Psoas muscle (tissue), 8 donors: ENCODE measurements at regions of chr3 and their contacts with region 1.

Region 1: DNA sequence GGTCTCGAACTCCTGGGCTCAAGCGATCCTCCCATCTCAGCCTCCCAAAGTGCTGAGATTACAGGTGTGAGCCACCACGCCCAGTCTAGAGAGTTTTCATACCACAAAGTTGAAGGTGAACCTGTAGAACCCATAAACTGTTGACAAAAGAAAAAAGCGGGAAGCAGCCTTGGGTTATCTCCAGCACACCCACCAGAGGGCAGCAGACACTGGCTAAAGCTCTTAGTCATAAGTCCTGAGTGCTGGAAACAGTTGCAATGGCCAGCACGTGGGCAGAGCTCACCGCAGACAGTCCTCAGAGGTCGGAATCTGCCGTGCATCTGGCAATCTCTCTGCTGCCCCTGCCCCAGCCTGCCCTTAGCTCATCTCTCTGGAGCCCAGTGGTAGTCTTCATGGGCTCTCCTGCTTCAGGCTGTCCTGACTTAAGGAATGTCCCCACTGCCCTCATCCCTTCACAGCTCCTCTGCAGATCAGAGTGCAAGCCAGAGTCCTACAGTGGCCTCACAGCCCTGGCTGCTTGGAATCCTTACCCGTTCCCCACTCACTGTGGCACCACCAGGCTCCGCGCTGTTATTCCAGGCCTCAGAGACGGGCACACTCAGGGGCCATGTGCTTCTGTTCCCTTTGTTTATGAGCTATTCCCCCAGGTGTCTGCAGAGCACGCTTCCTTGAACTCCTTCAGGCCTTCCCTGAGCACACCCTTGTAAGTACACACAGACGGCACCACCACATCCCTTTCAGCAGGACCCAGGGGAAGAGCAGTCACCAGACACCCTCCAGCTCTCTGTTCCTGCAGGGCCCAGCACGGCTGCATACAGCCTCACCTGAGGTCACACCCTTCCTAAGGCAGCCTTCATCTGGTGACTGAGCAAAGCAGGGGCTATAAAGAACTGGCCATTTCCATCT is 8.8 kb upstream of the ELP6 start:
- DNase-seq: peak; percentile 72 to 89
- ATAC-seq: peak; percentile 97 to 100 (median 99)
- H3K4me3 ChIP-seq: no peak overlapping the region
- H3K27ac ChIP-seq: no peak overlapping the region
- H3K4me1 ChIP-seq: no peaks in the 10 kb centered on the region
- H3K27me3 ChIP-seq: no peaks in the 10 kb centered on the region
- CTCF ChIP-seq: peak; percentile 91

Region 2: DNA sequence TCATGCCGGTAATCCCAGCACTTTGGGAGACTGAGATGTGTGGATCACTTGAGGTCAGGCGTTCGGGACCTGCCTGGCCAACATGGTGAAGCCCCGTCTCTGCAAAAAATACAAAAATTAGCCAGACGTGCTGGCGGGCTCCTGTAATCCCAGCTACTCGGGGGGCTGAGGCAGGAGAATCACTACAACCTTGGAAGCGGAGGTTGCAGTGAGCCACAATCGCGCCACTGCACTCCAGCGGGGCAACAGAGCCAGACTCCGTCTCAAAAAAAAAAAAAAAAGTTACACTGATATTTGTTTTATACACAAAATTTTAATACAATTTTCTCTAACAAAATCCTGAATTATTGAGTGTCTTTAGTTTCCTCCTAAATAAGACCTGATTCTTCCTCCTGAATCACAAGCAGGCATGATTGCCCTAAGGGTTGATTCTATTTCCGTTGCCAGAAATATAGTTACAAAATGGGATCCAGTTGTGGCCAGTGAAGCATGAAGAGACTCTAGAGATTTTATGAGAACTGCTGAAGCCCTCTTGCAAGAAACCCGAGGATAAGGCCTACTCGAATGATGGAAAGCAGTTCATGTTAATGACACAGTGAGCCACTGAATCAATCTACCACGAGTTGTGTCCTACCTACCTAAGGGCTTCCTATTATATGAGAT is 269.0 kb after region 1 on chr3:
- intact Hi-C with region 1: loop called (anchors 1 to 2 kb)
- DNase-seq: no peak
- ATAC-seq: no peak
- H3K4me3 ChIP-seq: no peak overlapping the region
- H3K27ac ChIP-seq: no peak overlapping the region
- H3K4me1 ChIP-seq: no peaks in the 10 kb centered on the region
- H3K27me3 ChIP-seq: no peaks in the 10 kb centered on the region
- CTCF ChIP-seq: no peak